ENCODE measurements at regions of chr2 and their contacts with region 1.

Region 1: GRCh38 chr2:109001201-109001600 is 12.2 kb upstream of the EDAR start:
- DNase-seq: no peak
- ATAC-seq: no peak
- H3K4me3 Mint-ChIP-seq: no peak overlapping the region
- H3K27ac Mint-ChIP-seq: no peak overlapping the region
- H3K4me1 Mint-ChIP-seq: peaks cover 8% of the 10 kb centered on the region; the same call in 1 of the 2 replicates
- H3K27me3 Mint-ChIP-seq: no peaks in the 10 kb centered on the region
- CTCF ChIP-seq: no peak

Region 2: DNA sequence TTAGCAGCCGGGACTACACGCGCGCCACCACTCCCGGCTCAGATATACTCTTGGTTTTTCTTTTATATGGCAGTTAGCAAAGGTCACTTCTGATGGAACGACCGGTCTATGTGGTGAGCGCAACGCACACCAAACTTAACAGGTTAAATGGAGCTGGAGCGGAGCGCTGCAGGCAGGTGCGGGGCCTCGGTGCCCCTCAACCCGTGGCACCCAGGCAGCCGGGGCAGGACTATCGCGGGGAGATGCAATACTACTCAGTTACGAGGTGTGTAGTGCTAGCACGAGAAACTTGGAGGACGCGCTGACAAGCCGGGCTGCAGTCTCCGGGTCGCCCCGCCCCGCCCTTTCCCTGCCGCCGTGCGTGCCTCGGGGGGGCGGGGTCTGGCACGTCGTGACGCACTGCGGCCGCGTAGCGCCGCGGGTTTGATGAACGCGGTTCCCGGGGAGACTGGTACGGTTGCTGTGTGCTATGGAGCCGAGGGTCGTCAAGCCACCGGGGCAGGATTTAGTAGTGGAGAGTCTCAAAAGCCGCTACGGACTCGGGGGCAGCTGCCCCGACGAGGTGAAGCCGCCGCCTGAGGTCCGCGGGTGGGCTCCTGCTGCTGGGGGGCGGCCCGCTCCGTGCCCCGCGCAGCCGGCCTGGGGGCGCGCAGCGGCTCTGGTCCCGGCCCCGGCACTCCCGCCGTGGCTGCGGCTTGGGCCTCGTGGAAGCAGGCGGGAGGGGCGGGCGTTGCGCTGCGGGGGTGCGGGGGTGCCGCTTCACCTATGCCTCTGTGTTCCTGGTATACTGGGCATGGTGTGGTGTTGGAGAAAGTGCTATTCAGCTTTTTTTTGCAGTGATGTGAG is 214.6 kb before region 1 on chr2 and contains the start of gene CCDC138:
- CTCF ChIA-PET with region 1: no interaction called
- POLR2A ChIA-PET with region 1: no interaction called
- DNase-seq: peak; percentile 94
- ATAC-seq: peak; percentile 97
- H3K4me3 Mint-ChIP-seq: peak within 1 kb of the TSS; percentile 98
- H3K27ac Mint-ChIP-seq: peak within 1 kb of the TSS; percentile 100
- H3K4me1 Mint-ChIP-seq: peaks cover 14% of the 10 kb centered on the region
- H3K27me3 Mint-ChIP-seq: no peaks in the 10 kb centered on the region
- CTCF ChIP-seq: no peak
- total RNA-seq, gene CCDC138: 22.8 to 23.7 TPM (median 23.5 TPM) in 3 replicates

Region 3: DNA sequence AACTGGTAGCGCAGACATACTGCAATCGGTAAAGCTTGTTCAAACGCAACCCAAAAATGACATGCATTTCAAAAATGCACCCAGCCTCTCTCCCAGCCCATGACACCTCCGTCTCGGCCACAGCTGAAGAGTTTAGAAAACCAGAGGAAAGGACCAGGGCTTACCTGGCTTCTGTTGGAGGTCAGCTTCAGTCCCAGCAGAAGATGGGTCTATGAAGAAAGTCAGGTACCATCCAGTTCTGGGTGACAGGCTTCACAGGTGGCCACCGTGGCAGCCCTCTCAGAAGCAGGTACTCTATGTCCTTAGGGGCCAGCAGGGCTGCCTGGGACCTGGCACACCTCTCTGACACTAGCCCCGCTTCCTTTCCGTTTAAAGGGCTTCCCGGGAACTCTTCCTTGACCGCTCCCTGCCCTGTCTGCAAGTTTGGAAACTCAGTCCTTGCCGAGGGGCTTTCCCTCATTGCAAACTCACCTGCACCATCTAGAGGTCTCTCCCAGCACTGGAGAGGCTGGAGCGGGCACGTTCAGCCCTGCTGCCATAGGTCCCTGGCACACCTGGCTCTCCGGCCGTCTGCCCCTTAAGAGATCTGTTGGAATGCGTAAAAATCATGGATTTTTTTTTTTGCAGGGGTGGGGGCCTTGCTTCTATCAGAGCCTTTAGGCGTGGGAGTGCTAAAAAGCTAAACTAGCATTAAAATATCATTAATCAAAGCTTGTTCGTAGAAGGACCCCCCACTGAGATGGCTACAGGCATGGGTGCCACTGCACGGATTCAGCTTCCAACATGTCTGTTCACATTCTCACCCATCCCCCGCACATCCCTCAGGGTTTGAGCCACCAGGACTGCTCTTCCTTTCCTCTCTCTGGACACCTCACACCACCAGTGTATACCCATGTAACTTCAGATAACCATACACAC is 12.1 kb before region 1 on chr2 and contains the start of gene EDAR:
- CTCF ChIA-PET with region 1: interaction called, 19 read pairs
- POLR2A ChIA-PET with region 1: no interaction called
- DNase-seq: peak; percentile 79
- ATAC-seq: peak; percentile 100
- H3K4me3 Mint-ChIP-seq: no peak within 1 kb of the TSS
- H3K27ac Mint-ChIP-seq: no peak within 1 kb of the TSS
- H3K4me1 Mint-ChIP-seq: no peaks in the 10 kb centered on the region
- H3K27me3 Mint-ChIP-seq: no peaks in the 10 kb centered on the region
- CTCF ChIP-seq: 0 out of 2 replicates have a peak, but pooled peaks have one; percentile 35
- total RNA-seq, gene EDAR: 0.05 TPM in 1 of 3 replicates, not detected in the others

Region 4: GRCh38 chr2:109031476-109032228 is 30.5 kb after region 1 on chr2:
- CTCF ChIA-PET with region 1: interaction called, 13 read pairs
- POLR2A ChIA-PET with region 1: no interaction called
- DNase-seq: peak; percentile 52
- ATAC-seq: peak; percentile 63
- H3K4me3 Mint-ChIP-seq: peak overlapping the region; percentile 73
- H3K27ac Mint-ChIP-seq: no peak overlapping the region; the same call in 1 of the 2 replicates
- H3K4me1 Mint-ChIP-seq: peaks cover 23% of the 10 kb centered on the region
- H3K27me3 Mint-ChIP-seq: peaks cover 61% of the 10 kb centered on the region
- CTCF ChIP-seq: no peak

Region 5: DNA sequence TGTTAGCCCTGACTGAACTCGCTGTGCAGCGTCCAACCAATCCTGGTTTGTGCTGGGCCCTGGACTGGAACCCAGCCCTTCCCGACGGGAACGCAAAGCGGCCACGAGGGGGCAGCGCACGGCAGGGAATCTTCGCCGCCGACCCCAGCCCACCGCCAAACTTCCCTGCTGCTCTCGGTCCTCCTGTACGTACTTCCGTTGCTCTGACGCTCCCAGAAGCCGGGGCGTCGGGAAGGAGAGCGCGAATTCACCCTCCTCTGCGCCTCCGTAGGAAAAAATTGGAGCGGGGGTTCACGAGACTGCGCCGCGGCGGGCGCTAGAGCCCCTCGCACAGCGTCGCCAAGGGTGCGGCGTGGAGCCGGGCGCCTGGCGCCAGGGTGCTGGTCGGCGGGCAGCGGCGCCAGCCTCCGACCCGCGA is 126.9 kb after region 1 on chr2:
- CTCF ChIA-PET with region 1: no interaction called
- POLR2A ChIA-PET with region 1: no interaction called
- DNase-seq: peak; percentile 86
- ATAC-seq: peak; percentile 83
- H3K4me3 Mint-ChIP-seq: peak overlapping the region; percentile 61
- H3K27ac Mint-ChIP-seq: no peak overlapping the region
- H3K4me1 Mint-ChIP-seq: peaks cover 16% of the 10 kb centered on the region
- H3K27me3 Mint-ChIP-seq: peaks cover 63% of the 10 kb centered on the region
- CTCF ChIP-seq: peak; percentile 71

Measured in WTC11 (cell line).